PC-9 (cell line): ENCODE measurements at regions of chr2 and their contacts with region 1.

Region 1: GRCh38 chr2:223357076-223357475 is 245.1 kb downstream of the SCG2 start:
- DNase-seq: no peak
- H3K4me3 ChIP-seq: no peak overlapping the region
- H3K27ac ChIP-seq: no peak overlapping the region
- H3K4me1 ChIP-seq: no peaks in the 10 kb centered on the region
- H3K27me3 ChIP-seq: no peaks in the 10 kb centered on the region
- CTCF ChIP-seq: no peak

Region 2: GRCh38 chr2:223884399-223884798 is 527.3 kb after region 1 on chr2:
- CTCF ChIA-PET with region 1: interaction called, 15 read pairs
- POLR2A ChIA-PET with region 1: no interaction called
- intact Hi-C with region 1: no loop called
- DNase-seq: no peak
- H3K4me3 ChIP-seq: no peak overlapping the region
- H3K27ac ChIP-seq: no peak overlapping the region
- H3K4me1 ChIP-seq: no peaks in the 10 kb centered on the region
- H3K27me3 ChIP-seq: no peaks in the 10 kb centered on the region
- CTCF ChIP-seq: no peak